Endothelial cell of umbilical vein (primary cell): ENCODE measurements at regions of chr19 and their contacts with region 1.

Region 1: GRCh38 chr19:44643605-44644401 is at the start of gene PVR:
- DNase-seq: peak; percentile 83
- H3K4me3 ChIP-seq: peak within 1 kb of the TSS; percentile 83 to 89 (median 85)
- H3K27ac ChIP-seq: peak within 1 kb of the TSS; percentile 89
- H3K4me1 ChIP-seq: peaks cover 41% of the 10 kb centered on the region
- H3K27me3 ChIP-seq: no peaks in the 10 kb centered on the region
- CTCF ChIP-seq: peak in 1 of 2 donors; percentile 10
- POLR2A ChIP-seq: peak; percentile 86
- total RNA-seq, gene PVR: 133 and 199 TPM in 2 replicates

Region 2: DNA sequence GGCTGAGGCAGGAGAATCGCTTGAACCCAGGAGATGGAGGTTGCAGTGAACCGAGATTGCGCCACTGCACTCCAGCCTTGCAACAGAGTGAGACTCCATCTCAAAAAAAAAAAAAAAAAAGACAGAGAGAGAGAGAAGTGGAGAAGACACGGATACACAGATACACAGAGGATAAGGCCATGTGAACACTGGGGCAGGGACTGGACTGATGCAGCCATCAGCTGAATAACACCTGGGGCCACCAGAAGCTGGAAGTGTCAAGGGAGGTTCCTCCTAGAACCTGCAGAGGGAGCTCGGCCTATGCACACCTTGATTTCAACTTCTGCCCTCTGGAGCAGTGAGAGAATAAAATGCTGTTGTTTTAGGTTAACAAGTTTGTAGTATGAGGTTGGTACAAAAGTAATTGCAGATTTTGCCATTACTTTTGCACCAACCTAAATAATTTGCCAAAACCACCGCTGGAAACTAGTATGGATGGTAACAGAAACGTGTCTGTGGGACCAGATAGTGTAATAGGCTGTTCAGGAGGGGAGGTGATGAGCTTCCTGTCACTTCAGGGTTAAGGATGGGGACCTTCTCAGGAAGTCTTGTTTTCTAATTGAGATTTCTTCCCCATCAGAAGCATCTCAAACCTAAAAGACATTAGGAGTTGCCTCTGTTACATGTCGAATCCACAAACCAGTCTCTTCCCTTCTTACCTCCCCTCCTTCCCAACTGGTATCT is 66.8 kb before region 1 on chr19:
- CTCF ChIA-PET with region 1: interaction called, 10 read pairs
- POLR2A ChIA-PET with region 1: no interaction called
- dilution Hi-C with region 1: no loop called
- intact Hi-C with region 1: no loop called
- DNase-seq: peak; percentile 43
- H3K4me3 ChIP-seq: no peak overlapping the region
- H3K27ac ChIP-seq: no peak overlapping the region
- H3K4me1 ChIP-seq: no peaks in the 10 kb centered on the region
- H3K27me3 ChIP-seq: no peaks in the 10 kb centered on the region
- CTCF ChIP-seq: peak; percentile 38 to 68
- POLR2A ChIP-seq: no peak

Region 3: GRCh38 chr19:44587963-44588770 is 55.6 kb before region 1 on chr19:
- CTCF ChIA-PET with region 1: interaction called, 15 read pairs
- POLR2A ChIA-PET with region 1: interaction called, 5 read pairs
- dilution Hi-C with region 1: no loop called
- intact Hi-C with region 1: loop called (anchors 1 kb)
- DNase-seq: peak; percentile 77
- H3K4me3 ChIP-seq: peak overlapping the region in 1 of 3 experiments; percentile 1
- H3K27ac ChIP-seq: peak overlapping the region; percentile 93
- H3K4me1 ChIP-seq: peaks cover 55% of the 10 kb centered on the region
- H3K27me3 ChIP-seq: no peaks in the 10 kb centered on the region
- CTCF ChIP-seq: peak in 1 of 2 donors; percentile 12
- POLR2A ChIP-seq: no peak

Region 4: GRCh38 chr19:44607049-44607448 is 36.8 kb before region 1 on chr19:
- CTCF ChIA-PET with region 1: interaction called, 9 read pairs
- POLR2A ChIA-PET with region 1: interaction called, 8 read pairs
- dilution Hi-C with region 1: no loop called
- intact Hi-C with region 1: loop called (anchors 1 kb)
- DNase-seq: peak; percentile 95
- H3K4me3 ChIP-seq: no peak overlapping the region
- H3K27ac ChIP-seq: peak overlapping the region; percentile 93
- H3K4me1 ChIP-seq: peaks cover 62% of the 10 kb centered on the region
- H3K27me3 ChIP-seq: no peaks in the 10 kb centered on the region
- CTCF ChIP-seq: no peak
- POLR2A ChIP-seq: peak; percentile 63

Region 5: DNA sequence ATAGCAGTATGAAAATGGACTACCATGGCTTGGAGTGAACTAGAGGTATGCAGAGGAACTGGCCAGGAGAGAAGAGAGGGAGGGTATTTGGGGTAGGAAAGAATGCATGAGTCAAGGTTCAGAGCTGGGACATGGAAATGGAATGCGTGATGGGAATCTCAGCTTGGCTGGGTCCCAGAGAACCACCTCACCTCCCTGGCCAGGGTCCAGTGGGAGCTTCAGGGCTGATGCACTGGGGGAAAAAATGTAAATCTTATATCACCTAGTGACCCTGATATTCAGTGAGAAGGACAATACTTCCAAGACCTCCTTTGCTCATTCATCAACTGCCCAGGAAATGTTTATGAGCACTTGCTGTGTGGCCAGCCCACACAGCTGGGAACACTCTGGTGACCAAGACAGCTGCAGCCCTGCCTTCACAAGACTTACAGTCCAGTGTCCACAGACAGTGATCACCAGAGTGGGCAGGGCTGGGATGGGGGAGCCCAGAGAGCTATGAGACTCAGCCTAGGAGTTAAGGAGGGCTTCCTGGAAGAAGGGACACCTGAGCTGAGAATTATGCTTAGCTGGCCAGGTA is 17.7 kb before region 1 on chr19:
- CTCF ChIA-PET with region 1: interaction called, 3 read pairs
- POLR2A ChIA-PET with region 1: interaction called, 5 read pairs
- dilution Hi-C with region 1: no loop called
- intact Hi-C with region 1: loop called (anchors 2 kb)
- DNase-seq: peak; percentile 93
- H3K4me3 ChIP-seq: no peak overlapping the region
- H3K27ac ChIP-seq: peak overlapping the region; percentile 73
- H3K4me1 ChIP-seq: peaks cover 31% of the 10 kb centered on the region
- H3K27me3 ChIP-seq: no peaks in the 10 kb centered on the region
- CTCF ChIP-seq: no peak
- POLR2A ChIP-seq: peak; percentile 60

Region 6: GRCh38 chr19:44653977-44654774 is 10.4 kb after region 1 on chr19:
- CTCF ChIA-PET with region 1: interaction called, 12 read pairs
- POLR2A ChIA-PET with region 1: no interaction called
- dilution Hi-C with region 1: no loop called
- intact Hi-C with region 1: no loop called
- DNase-seq: peak; percentile 48
- H3K4me3 ChIP-seq: no peak overlapping the region
- H3K27ac ChIP-seq: no peak overlapping the region
- H3K4me1 ChIP-seq: no peaks in the 10 kb centered on the region
- H3K27me3 ChIP-seq: no peaks in the 10 kb centered on the region
- CTCF ChIP-seq: peak; percentile 62 to 76
- POLR2A ChIP-seq: no peak